ENCODE measurements at regions of chr16 and their contacts with region 1.

Region 1: DNA sequence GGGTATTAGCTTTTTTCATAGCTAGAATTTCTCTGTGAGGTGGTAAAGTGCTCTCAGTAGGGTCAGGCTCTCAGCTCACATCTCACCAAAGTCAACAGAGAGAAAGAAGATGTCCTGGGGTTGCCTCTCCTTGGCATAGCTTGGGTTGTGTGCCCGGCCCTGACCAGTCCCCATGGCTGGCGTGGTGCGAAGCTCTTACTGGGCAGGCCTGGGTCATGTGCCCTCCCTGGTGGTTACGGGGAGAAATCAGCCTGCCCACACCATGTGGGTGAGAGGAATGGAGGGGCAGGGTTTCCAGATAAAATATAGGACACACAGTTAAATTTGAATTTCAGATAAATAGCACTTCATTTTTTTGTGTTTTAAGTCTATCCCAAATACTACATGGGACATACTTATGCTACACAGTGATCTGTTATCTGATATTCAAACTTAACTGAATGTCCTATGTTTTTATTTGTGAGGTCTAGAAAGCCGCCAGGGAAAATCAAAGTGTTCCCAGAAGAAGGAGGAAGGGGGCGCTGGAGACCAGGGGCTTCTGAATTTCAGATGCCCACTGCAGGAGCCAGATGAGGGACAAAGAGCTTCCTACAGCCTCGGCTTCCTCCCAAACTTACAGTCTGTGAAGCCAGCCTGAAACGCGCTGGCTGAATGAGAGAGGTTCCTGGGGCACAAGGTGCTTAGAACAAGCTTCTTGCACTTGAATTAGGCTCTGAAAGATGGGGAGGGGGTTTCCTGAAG is 45.4 kb downstream of the NKD1 start:
- DNase-seq: no peak
- ATAC-seq: no peak

Region 2: GRCh38 chr16:50627419-50627818 is 33.8 kb after region 1 on chr16:
- intact Hi-C with region 1: loop called (anchors 5 kb)
- DNase-seq: peak; percentile 70
- ATAC-seq: peak; percentile 93

Region 3: DNA sequence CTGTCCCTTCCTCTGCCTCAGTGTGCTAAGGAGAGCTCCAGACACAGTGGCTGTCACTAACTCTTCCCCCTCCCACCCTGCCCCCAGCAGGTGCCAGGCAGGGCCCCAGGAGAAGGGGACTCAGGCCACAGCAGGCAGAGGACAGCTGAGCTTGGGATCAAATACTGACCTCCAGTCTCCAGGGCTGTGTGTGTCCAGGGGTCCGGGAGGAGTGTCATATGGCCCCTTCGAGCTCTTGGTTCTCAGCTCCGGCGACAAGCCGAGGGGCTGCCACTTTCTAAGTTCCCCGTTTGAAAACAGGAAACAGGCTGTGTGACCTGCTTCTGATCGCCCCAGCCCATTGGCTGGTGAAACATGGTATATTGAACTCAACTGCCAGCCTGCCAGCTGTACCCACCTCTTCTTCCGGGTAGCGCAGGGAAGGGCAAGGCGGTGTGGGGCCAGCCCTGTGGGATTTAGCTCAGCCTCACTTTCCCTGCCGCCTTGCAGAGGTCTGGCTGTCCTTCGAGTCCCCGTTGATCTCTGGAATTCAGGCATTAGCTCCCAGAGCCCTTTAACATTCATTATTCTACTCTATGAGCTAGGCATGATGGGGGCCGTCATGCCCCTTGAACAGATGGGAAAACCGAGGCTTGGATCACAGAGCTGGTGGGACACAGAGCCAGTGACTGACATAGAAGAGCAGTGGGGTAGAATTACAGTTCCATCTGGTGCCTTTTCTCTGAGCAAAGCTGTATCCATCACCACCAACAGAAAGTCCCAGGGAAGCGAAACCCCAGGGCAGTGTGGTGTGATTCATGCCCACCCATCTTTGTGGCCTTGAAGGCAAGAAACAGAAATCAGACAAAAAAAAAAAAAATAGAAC is 87.7 kb after region 1 on chr16 and contains the start of gene SNX20:
- intact Hi-C with region 1: no loop called
- DNase-seq: peak; percentile 73
- ATAC-seq: peak; percentile 71
- total RNA-seq, gene SNX20: 0.62 TPM

Region 4: GRCh38 chr16:50741808-50742575 is 148.4 kb after region 1 on chr16 and contains the start of gene CYLD:
- intact Hi-C with region 1: loop called (anchors 5 kb)
- DNase-seq: peak; percentile 100
- ATAC-seq: peak; percentile 99
- total RNA-seq, gene CYLD: 29.4 TPM

Region 5: GRCh38 chr16:50806099-50807062 is 212.8 kb after region 1 on chr16:
- intact Hi-C with region 1: no loop called
- DNase-seq: peak; percentile 87
- ATAC-seq: peak; percentile 95

Measured in Right ventricle myocardium superior (tissue), 1 donor.